Testis (tissue), 5 donors: ENCODE measurements at regions of chr3 and their contacts with region 1.

Region 1: GRCh38 chr3:170811928-170812591 is 57.9 kb downstream of the RPL22L1 start:
- DNase-seq: peak; percentile 89
- H3K4me3 ChIP-seq: no peak overlapping the region
- H3K27ac ChIP-seq: peak overlapping the region in 1 of 2 donors; percentile 41
- H3K4me1 ChIP-seq: peaks cover 3% of the 10 kb centered on the region
- H3K27me3 ChIP-seq: no peaks in the 10 kb centered on the region
- CTCF ChIP-seq: peak; percentile 97 to 98 (median 98)
- POLR2A ChIP-seq: no peak

Region 2: GRCh38 chr3:170419557-170420087 is 392.4 kb before region 1 on chr3:
- intact Hi-C with region 1: loop called (anchors 10 kb)
- DNase-seq: peak; percentile 62
- H3K4me3 ChIP-seq: peak overlapping the region; percentile 80 to 94
- H3K27ac ChIP-seq: peak overlapping the region; percentile 89 to 94
- H3K4me1 ChIP-seq: peaks cover 15% of the 10 kb centered on the region
- H3K27me3 ChIP-seq: no peaks in the 10 kb centered on the region
- CTCF ChIP-seq: no peak
- POLR2A ChIP-seq: no peak

Region 3: GRCh38 chr3:170499565-170500156 is 312.4 kb before region 1 on chr3:
- intact Hi-C with region 1: loop called (anchors 5 kb)
- DNase-seq: peak; percentile 85
- H3K4me3 ChIP-seq: no peak overlapping the region
- H3K27ac ChIP-seq: peak overlapping the region in 1 of 2 donors; percentile 86
- H3K4me1 ChIP-seq: peaks cover 42% of the 10 kb centered on the region
- H3K27me3 ChIP-seq: no peaks in the 10 kb centered on the region
- CTCF ChIP-seq: peak; percentile 38 to 68 (median 66)
- POLR2A ChIP-seq: no peak

Region 4: GRCh38 chr3:170679190-170679589 is 132.9 kb before region 1 on chr3:
- intact Hi-C with region 1: no loop called
- DNase-seq: no peak
- H3K4me3 ChIP-seq: no peak overlapping the region
- H3K27ac ChIP-seq: no peak overlapping the region
- H3K4me1 ChIP-seq: no peaks in the 10 kb centered on the region
- H3K27me3 ChIP-seq: no peaks in the 10 kb centered on the region
- CTCF ChIP-seq: no peak
- POLR2A ChIP-seq: no peak